ENCODE measurements at regions of chr16 and their contacts with region 1.

Region 1: GRCh38 chr16:56988948-56989945 is at the start of gene NLRC5:
- DNase-seq: peak; percentile 97
- ATAC-seq: peak; percentile 78
- H3K4me3 Mint-ChIP-seq: peak within 1 kb of the TSS; percentile 98
- H3K27ac Mint-ChIP-seq: peak within 1 kb of the TSS; percentile 99
- H3K4me1 Mint-ChIP-seq: peaks cover 69% of the 10 kb centered on the region
- H3K27me3 Mint-ChIP-seq: no peaks in the 10 kb centered on the region
- total RNA-seq, gene NLRC5: 143 to 175 TPM

Region 2: GRCh38 chr16:56871172-56871593 is 118.1 kb before region 1 on chr16:
- CTCF ChIA-PET with region 1: no interaction called
- POLR2A ChIA-PET with region 1: no interaction called
- intact Hi-C with region 1: no loop called
- DNase-seq: peak; percentile 41
- ATAC-seq: peak; percentile 45
- H3K4me3 Mint-ChIP-seq: no peak overlapping the region
- H3K27ac Mint-ChIP-seq: no peak overlapping the region
- H3K4me1 Mint-ChIP-seq: no peaks in the 10 kb centered on the region
- H3K27me3 Mint-ChIP-seq: no peaks in the 10 kb centered on the region

Region 3: DNA sequence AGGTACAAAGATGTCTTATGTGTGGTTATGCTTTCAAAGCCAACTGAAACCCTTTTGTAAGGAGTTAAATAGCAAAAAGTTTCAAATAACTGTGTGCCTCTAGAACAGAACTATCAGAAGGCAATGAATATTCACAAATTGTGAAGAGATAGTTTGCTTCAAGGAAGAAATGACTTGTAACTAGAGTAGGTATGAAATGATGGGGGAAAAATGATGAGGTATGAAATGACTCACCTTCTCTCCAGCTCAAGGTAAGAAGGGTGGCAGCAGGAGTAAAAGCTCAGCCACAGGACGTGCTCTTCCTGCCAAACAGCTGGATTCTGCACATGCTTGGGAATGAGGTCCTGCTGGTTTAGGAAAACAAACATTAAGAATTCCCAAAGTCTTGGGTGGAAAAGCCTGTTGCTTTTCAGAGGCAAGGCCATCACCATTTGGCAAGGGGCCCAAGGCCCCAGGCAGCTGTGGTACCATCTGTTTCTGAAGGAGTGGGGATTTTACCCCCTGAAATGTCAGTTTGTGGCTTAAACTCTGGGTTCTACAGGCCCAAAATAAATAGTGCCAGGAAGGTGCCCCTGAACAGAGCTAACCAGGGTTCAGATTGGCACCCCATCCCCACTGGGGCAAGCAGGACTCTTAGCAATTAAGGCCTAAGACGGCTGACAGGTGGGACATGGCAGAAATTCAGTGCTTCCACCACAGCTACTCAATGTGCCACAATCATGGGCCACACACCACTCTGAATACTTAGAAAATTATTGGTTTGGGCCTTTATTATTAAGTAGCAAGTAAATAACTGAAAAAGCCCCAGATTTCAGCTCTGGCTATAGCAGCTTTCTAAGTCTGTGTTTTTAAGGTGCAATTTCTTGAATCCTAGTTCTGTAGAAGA is 44.0 kb before region 1 on chr16:
- CTCF ChIA-PET with region 1: no interaction called
- POLR2A ChIA-PET with region 1: interaction called, 9 read pairs
- intact Hi-C with region 1: loop called in 1 of 2 experiments (anchors 1 kb)
- DNase-seq: peak; percentile 61
- ATAC-seq: peak; percentile 79
- H3K4me3 Mint-ChIP-seq: peak overlapping the region; percentile 51
- H3K27ac Mint-ChIP-seq: peak overlapping the region; percentile 91
- H3K4me1 Mint-ChIP-seq: peaks cover 63% of the 10 kb centered on the region
- H3K27me3 Mint-ChIP-seq: no peaks in the 10 kb centered on the region

Region 4: GRCh38 chr16:57000271-57001025 is 11.2 kb after region 1 on chr16:
- CTCF ChIA-PET with region 1: interaction called, 6 read pairs
- POLR2A ChIA-PET with region 1: interaction called, 10 read pairs
- intact Hi-C with region 1: loop called in 1 of 2 experiments (anchors 1 kb)
- DNase-seq: peak; percentile 82
- ATAC-seq: peak; percentile 89
- H3K4me3 Mint-ChIP-seq: peak overlapping the region; percentile 59
- H3K27ac Mint-ChIP-seq: peak overlapping the region; percentile 98
- H3K4me1 Mint-ChIP-seq: peaks cover 92% of the 10 kb centered on the region
- H3K27me3 Mint-ChIP-seq: no peaks in the 10 kb centered on the region

Region 5: GRCh38 chr16:57039148-57039812 is 50.0 kb after region 1 on chr16:
- CTCF ChIA-PET with region 1: interaction called, 12 read pairs
- POLR2A ChIA-PET with region 1: interaction called, 9 read pairs
- intact Hi-C with region 1: loop called (anchors 1 kb)
- DNase-seq: peak; percentile 60
- ATAC-seq: peak; percentile 9
- H3K4me3 Mint-ChIP-seq: peak overlapping the region; percentile 2
- H3K27ac Mint-ChIP-seq: peak overlapping the region; percentile 97
- H3K4me1 Mint-ChIP-seq: peaks cover 89% of the 10 kb centered on the region
- H3K27me3 Mint-ChIP-seq: no peaks in the 10 kb centered on the region

Measured in activated CD4-positive, alpha-beta T cell treated with anti-CD3 and anti-CD28 coated beads for 36 hours (primary cell).